PC-3 (cell line): ENCODE measurements at regions of chr3 and their contacts with region 1.

Region 1: GRCh38 chr3:28286595-28286994 is 45.2 kb downstream of the CMC1 start:
- DNase-seq: peak; percentile 68
- ATAC-seq: peak; percentile 98
- H3K4me3 ChIP-seq: no peak overlapping the region
- H3K27ac ChIP-seq: no peak overlapping the region
- H3K4me1 ChIP-seq: no peaks in the 10 kb centered on the region
- H3K27me3 ChIP-seq: no peaks in the 10 kb centered on the region
- CTCF ChIP-seq: peak; percentile 85

Region 2: DNA sequence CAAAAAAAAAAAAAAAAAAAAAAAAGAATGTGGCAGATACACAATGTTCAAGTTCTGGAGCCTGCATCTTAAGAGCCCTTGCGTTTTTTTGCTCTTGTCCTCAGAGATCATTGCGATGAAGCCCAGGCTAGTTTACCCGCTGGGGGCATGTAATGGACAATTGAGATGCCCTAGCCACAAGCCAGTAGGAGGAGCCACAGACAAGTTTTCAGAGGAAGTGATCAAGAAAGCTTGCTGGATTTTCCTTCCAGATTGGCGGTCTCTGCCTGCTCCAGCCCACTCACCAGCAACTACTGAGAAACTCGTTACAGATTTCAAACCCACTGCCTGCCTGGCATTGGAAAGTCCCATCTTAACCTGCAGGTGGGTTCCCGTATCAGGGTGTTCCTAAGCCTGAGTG is 372.4 kb before region 1 on chr3:
- CTCF ChIA-PET with region 1: no interaction called
- POLR2A ChIA-PET with region 1: no interaction called
- intact Hi-C with region 1: loop called (anchors 10 kb)
- DNase-seq: peak; percentile 32
- ATAC-seq: peak; percentile 67; the same call in 1 of the 2 replicates
- H3K4me3 ChIP-seq: no peak overlapping the region
- H3K27ac ChIP-seq: no peak overlapping the region
- H3K4me1 ChIP-seq: no peaks in the 10 kb centered on the region
- H3K27me3 ChIP-seq: no peaks in the 10 kb centered on the region
- CTCF ChIP-seq: peak; percentile 47

Region 3: GRCh38 chr3:27943106-27943505 is 343.5 kb before region 1 on chr3:
- CTCF ChIA-PET with region 1: no interaction called
- POLR2A ChIA-PET with region 1: no interaction called
- intact Hi-C with region 1: loop called (anchors 1 kb)
- DNase-seq: peak; percentile 55
- ATAC-seq: peak; percentile 67
- H3K4me3 ChIP-seq: no peak overlapping the region
- H3K27ac ChIP-seq: no peak overlapping the region
- H3K4me1 ChIP-seq: no peaks in the 10 kb centered on the region
- H3K27me3 ChIP-seq: no peaks in the 10 kb centered on the region
- CTCF ChIP-seq: peak; percentile 67

Region 4: DNA sequence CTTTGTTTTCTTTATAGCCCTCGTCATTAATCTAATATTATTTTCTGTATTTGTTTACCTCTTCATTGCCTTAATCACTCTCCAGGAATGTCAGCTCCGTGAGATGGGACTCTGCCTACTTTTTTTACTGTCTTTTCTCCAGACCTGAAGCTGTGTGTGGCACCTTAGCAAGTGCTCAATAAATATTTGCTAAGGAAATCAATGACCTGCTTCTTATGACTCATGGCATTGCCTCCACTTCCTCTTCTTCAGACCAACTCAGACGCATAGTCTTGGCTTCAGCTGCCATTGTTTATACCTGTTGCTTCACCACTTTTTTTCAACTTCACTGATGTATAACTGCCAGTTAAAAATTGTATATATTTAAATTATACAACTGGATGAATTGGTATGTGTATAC is 263.7 kb before region 1 on chr3:
- CTCF ChIA-PET with region 1: no interaction called
- POLR2A ChIA-PET with region 1: interaction called, 3 read pairs
- intact Hi-C with region 1: loop called (anchors 2 kb)
- DNase-seq: peak; percentile 93
- ATAC-seq: peak; percentile 83
- H3K4me3 ChIP-seq: no peak overlapping the region
- H3K27ac ChIP-seq: peak overlapping the region; percentile 73
- H3K4me1 ChIP-seq: peaks cover 22% of the 10 kb centered on the region
- H3K27me3 ChIP-seq: no peaks in the 10 kb centered on the region
- CTCF ChIP-seq: no peak

Region 5: DNA sequence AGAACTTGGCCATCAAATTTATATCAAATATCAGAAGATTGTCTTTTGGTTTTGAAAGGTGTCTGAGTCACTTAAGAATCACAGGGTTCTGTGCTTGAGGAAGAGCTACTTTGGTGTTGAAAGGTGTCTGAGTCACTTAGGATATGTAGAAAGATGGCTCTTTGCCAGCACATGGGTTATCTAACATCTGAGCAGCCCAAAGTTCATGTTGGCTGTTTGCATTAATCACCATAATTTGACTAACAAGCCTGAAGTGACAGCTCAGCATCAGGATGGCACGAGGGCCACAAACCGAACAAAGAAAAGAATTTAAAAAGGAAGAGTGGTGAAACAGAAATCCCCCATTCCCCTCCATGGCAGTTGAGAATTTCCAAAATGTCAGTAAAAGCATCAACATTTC is 235.7 kb before region 1 on chr3:
- CTCF ChIA-PET with region 1: no interaction called
- POLR2A ChIA-PET with region 1: no interaction called
- intact Hi-C with region 1: loop called (anchors 10 kb)
- DNase-seq: peak; percentile 97
- ATAC-seq: peak; percentile 69
- H3K4me3 ChIP-seq: no peak overlapping the region
- H3K27ac ChIP-seq: peak overlapping the region; percentile 58
- H3K4me1 ChIP-seq: peaks cover 55% of the 10 kb centered on the region
- H3K27me3 ChIP-seq: no peaks in the 10 kb centered on the region
- CTCF ChIP-seq: no peak

Region 6: GRCh38 chr3:28139967-28140634 is 146.5 kb before region 1 on chr3:
- CTCF ChIA-PET with region 1: no interaction called
- POLR2A ChIA-PET with region 1: no interaction called
- intact Hi-C with region 1: loop called (anchors 1 kb)
- DNase-seq: peak; percentile 73
- ATAC-seq: peak; percentile 96
- H3K4me3 ChIP-seq: no peak overlapping the region
- H3K27ac ChIP-seq: no peak overlapping the region
- H3K4me1 ChIP-seq: peaks cover 14% of the 10 kb centered on the region
- H3K27me3 ChIP-seq: no peaks in the 10 kb centered on the region
- CTCF ChIP-seq: no peak

Region 7: GRCh38 chr3:28241221-28242160 is 45.1 kb before region 1 on chr3 and contains the start of gene CMC1:
- CTCF ChIA-PET with region 1: no interaction called
- POLR2A ChIA-PET with region 1: no interaction called
- intact Hi-C with region 1: loop called (anchors 2 kb)
- DNase-seq: peak; percentile 98
- ATAC-seq: peak; percentile 99
- H3K4me3 ChIP-seq: peak within 1 kb of the TSS; percentile 84
- H3K27ac ChIP-seq: peak within 1 kb of the TSS; percentile 59
- H3K4me1 ChIP-seq: peaks cover 22% of the 10 kb centered on the region
- H3K27me3 ChIP-seq: no peaks in the 10 kb centered on the region
- CTCF ChIP-seq: no peak
- total RNA-seq, gene CMC1: 11.3 and 16.7 TPM in 2 replicates